Left cardiac atrium (tissue), 4 donors: ENCODE measurements at regions of chr11 and their contacts with region 1.

Region 1: DNA sequence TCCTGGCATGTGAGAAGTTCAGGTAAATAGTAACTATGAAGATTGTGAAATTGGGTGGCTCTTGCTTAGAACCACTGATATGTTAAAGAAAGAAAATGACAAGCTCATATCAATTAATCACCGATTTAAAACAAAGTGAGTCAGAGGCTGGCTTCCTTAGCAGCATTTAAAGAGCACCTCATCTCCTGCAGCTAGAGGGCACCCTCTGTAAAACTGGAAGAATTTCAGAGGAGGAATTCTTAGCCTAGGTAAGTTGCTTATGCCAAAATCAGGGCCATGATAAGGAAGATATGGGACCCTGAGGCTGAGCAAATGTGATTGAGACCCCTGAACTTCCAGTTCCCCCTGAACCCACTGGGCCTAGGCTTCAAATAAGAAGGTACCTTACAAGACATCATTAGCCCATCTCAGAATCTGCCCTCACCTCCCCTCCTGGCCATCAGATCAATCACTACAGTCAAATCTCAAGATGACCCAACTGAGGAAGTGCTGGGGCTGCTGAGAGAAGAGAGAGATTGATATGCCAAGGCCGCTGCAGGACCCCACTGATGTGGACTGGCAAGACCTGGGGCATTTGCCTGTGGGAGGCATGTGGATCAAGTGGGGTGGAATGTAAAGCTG is 8.6 kb upstream of the CD3E start:
- DNase-seq: no peak
- ATAC-seq: peak in 1 of 2 donors; percentile 37

Region 2: GRCh38 chr11:117743123-117743815 is 552.7 kb before region 1 on chr11:
- intact Hi-C with region 1: no loop called
- DNase-seq: no peak
- ATAC-seq: no peak

Region 3: DNA sequence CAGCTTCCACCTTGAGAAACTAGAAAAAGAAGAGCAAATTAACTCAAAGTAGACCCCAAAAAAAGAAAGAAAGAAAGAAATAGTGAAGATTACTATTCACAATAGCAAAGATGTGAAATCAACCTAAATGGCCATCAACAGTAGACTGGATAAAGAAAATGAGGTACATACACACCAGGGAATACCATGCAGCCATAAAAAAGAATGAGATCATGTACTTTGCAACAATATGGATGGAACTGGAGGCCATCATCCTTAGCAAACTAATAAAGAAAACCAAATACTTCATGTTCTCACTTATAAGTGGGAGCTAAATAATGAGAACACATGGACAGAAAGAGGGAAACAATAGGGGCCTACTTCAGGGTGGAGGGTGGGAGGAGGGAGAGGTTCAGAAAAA is 32.8 kb after region 1 on chr11:
- intact Hi-C with region 1: no loop called
- DNase-seq: no peak
- ATAC-seq: no peak

Region 4: GRCh38 chr11:118343981-118344515 is 48.1 kb after region 1 on chr11 and contains the start of gene CD3G:
- intact Hi-C with region 1: no loop called
- DNase-seq: no peak
- ATAC-seq: peak in 1 of 2 donors; percentile 55
- total RNA-seq, gene CD3G: 0.76 to 1.4 TPM

Region 5: GRCh38 chr11:118488480-118489109 is 192.7 kb after region 1 on chr11:
- intact Hi-C with region 1: loop called in 1 of 2 experiments (anchors 2 kb)
- DNase-seq: peak; percentile 44
- ATAC-seq: peak; percentile 65 to 67